ENCODE measurements at regions of chr22 and their contacts with region 1.

Region 1: DNA sequence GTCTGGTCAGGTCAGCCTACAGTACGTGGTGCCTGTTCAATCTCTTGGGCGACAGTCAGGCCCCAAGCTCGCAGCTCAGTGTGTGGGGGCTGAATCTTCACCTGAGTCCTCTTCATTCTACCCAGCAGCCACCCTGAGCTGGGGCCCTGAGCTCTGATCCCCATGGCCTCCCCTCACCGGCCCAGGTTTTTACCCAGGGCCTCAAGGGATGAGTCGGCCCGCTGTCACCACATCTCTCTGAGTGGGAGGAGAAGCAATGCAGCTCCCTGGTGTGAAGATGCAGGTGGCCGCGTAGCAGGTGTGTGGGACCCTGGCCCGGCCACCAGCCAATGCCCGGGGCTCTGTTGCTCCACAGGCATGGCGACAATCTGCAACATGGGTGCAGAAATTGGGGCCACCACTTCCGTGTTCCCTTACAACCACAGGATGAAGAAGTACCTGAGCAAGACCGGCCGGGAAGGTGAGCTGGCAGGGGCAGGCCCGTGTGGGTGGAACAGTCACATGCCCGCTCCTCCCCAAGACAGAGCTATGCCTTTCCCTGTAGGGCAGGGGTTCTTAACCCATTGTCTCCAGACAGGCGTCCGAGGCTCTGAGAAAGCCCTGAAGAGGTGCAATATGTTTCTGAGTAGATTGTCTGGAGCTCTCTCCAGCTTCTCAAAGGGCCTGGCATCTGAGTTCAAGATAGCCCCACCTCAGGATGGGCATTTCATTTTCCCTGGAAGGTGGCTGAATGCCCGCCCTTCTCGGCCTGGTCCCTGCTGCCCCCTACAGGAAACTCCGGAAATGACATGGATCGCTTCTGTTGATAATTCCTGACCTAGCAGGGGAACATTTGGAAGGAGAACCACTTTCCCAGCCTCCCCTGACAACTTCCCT is 26.9 kb downstream of the POLR3H start:
- DNase-seq: peak; percentile 61 to 76
- ATAC-seq: peak in 7 of 8 donors; percentile 21 to 60 (median 32)
- H3K4me3 ChIP-seq: no peak overlapping the region
- H3K27ac ChIP-seq: peak overlapping the region in 8 of 10 donors; percentile 19 to 70 (median 46)
- H3K4me1 ChIP-seq: peaks cover 1 to 62% (median 26%) of the 10 kb centered on the region in 9 donors
- H3K27me3 ChIP-seq: no peaks in the 10 kb centered on the region
- CTCF ChIP-seq: peak; percentile 81 to 94 (median 89)

Region 2: GRCh38 chr22:41403532-41404318 is 113.7 kb before region 1 on chr22:
- intact Hi-C with region 1: loop called (anchors 1 to 5 kb)
- DNase-seq: peak; percentile 91
- ATAC-seq: peak; percentile 85 to 94 (median 91)
- H3K4me3 ChIP-seq: peak overlapping the region in 1 of 10 donors; percentile 20
- H3K27ac ChIP-seq: peak overlapping the region in 7 of 10 donors; percentile 35 to 82 (median 77)
- H3K4me1 ChIP-seq: peaks cover 0 to 28% (median 24%) of the 10 kb centered on the region in 9 donors
- H3K27me3 ChIP-seq: no peaks in the 10 kb centered on the region
- CTCF ChIP-seq: peak; percentile 95 to 98 (median 98)

Region 3: GRCh38 chr22:41479671-41480396 is 37.6 kb before region 1 on chr22:
- intact Hi-C with region 1: loop called in 3 of 10 experiments (anchors 5 to 10 kb)
- DNase-seq: no peak
- ATAC-seq: peak in 6 of 8 donors; percentile 3 to 32 (median 19)
- H3K4me3 ChIP-seq: no peak overlapping the region
- H3K27ac ChIP-seq: peak overlapping the region in 9 of 10 donors; percentile 60 to 77 (median 71)
- H3K4me1 ChIP-seq: peaks cover 30 to 99% (median 78%) of the 10 kb centered on the region in 9 donors
- H3K27me3 ChIP-seq: no peaks in the 10 kb centered on the region
- CTCF ChIP-seq: no peak